MCF 10A (cell line): ENCODE measurements at regions of chr21 and their contacts with region 1.

Region 1: GRCh38 chr21:32371913-32372314 is 20.9 kb downstream of the URB1 start:
- DNase-seq: peak; percentile 95
- H3K4me3 Mint-ChIP-seq: peak overlapping the region; percentile 31
- H3K27ac Mint-ChIP-seq: peak overlapping the region; percentile 95
- H3K4me1 Mint-ChIP-seq: peaks cover 39% of the 10 kb centered on the region
- H3K27me3 Mint-ChIP-seq: no peaks in the 10 kb centered on the region
- CTCF ChIP-seq: no peak

Region 2: GRCh38 chr21:32359711-32360260 is 12.1 kb before region 1 on chr21:
- CTCF ChIA-PET with region 1: interaction called, 14 read pairs
- POLR2A ChIA-PET with region 1: interaction called, 16 read pairs
- intact Hi-C with region 1: no loop called
- DNase-seq: peak; percentile 42
- H3K4me3 Mint-ChIP-seq: no peak overlapping the region
- H3K27ac Mint-ChIP-seq: no peak overlapping the region
- H3K4me1 Mint-ChIP-seq: peaks cover 9% of the 10 kb centered on the region
- H3K27me3 Mint-ChIP-seq: no peaks in the 10 kb centered on the region
- CTCF ChIP-seq: peak; percentile 34

Region 3: GRCh38 chr21:32382108-32382644 is 10.3 kb after region 1 on chr21:
- CTCF ChIA-PET with region 1: interaction called, 10 read pairs
- POLR2A ChIA-PET with region 1: interaction called, 23 read pairs
- intact Hi-C with region 1: no loop called
- DNase-seq: no peak
- H3K4me3 Mint-ChIP-seq: no peak overlapping the region
- H3K27ac Mint-ChIP-seq: peak overlapping the region; percentile 51
- H3K4me1 Mint-ChIP-seq: peaks cover 18% of the 10 kb centered on the region
- H3K27me3 Mint-ChIP-seq: no peaks in the 10 kb centered on the region
- CTCF ChIP-seq: no peak

Region 4: DNA sequence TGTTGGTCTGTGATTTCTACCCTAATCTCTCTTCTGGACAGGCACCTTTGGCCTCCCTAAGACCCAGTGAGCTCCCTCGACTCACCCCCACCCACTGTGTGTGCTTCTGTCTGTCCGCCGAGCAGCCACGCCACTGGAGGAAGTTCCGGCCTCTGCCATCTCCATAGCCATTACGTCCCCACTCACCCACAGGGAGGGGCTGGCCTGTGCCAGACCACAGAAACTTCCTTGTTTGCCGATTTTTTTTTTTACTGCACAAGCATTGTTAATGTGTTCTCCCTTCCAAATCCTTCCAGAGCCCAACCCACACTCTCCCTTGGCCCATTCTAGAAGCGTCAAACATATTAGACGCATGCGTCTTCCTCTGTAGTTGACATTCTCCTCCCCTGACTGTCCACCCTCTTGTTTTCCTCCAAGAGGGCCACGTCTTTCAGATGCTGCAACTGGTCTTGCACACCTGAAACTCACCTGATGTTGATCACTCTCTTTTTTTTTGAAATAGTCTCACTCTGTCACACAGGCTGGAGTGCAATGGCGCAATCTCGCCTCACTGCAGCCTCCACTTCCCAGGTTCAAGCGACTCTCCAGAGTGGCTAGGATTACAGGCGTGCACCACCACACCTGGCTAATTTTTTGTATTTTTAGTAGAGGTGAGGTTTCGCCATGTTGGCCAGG is 112.9 kb after region 1 on chr21:
- CTCF ChIA-PET with region 1: no interaction called
- POLR2A ChIA-PET with region 1: no interaction called
- intact Hi-C with region 1: no loop called
- DNase-seq: no peak
- H3K4me3 Mint-ChIP-seq: no peak overlapping the region
- H3K27ac Mint-ChIP-seq: peak overlapping the region; percentile 39
- H3K4me1 Mint-ChIP-seq: no peaks in the 10 kb centered on the region
- H3K27me3 Mint-ChIP-seq: no peaks in the 10 kb centered on the region
- CTCF ChIP-seq: no peak